ENCODE measurements at regions of chr7 and their contacts with region 1.

Region 1: GRCh38 chr7:42886923-42887505 is 24.9 kb downstream of the C7orf25 start:
- DNase-seq: no peak
- ATAC-seq: no peak
- H3K4me3 Mint-ChIP-seq: peak overlapping the region; percentile 78
- H3K27ac Mint-ChIP-seq: no peak overlapping the region
- H3K4me1 Mint-ChIP-seq: peaks cover 23% of the 10 kb centered on the region
- H3K27me3 Mint-ChIP-seq: peaks cover 5% of the 10 kb centered on the region

Region 2: GRCh38 chr7:42876182-42877068 is 10.6 kb before region 1 on chr7:
- CTCF ChIA-PET with region 1: interaction called, 23 read pairs
- POLR2A ChIA-PET with region 1: no interaction called
- DNase-seq: peak; percentile 61
- ATAC-seq: peak; percentile 65
- H3K4me3 Mint-ChIP-seq: no peak overlapping the region
- H3K27ac Mint-ChIP-seq: no peak overlapping the region
- H3K4me1 Mint-ChIP-seq: no peaks in the 10 kb centered on the region
- H3K27me3 Mint-ChIP-seq: no peaks in the 10 kb centered on the region